ENCODE measurements at regions of chr20 and their contacts with region 1.

Region 1: DNA sequence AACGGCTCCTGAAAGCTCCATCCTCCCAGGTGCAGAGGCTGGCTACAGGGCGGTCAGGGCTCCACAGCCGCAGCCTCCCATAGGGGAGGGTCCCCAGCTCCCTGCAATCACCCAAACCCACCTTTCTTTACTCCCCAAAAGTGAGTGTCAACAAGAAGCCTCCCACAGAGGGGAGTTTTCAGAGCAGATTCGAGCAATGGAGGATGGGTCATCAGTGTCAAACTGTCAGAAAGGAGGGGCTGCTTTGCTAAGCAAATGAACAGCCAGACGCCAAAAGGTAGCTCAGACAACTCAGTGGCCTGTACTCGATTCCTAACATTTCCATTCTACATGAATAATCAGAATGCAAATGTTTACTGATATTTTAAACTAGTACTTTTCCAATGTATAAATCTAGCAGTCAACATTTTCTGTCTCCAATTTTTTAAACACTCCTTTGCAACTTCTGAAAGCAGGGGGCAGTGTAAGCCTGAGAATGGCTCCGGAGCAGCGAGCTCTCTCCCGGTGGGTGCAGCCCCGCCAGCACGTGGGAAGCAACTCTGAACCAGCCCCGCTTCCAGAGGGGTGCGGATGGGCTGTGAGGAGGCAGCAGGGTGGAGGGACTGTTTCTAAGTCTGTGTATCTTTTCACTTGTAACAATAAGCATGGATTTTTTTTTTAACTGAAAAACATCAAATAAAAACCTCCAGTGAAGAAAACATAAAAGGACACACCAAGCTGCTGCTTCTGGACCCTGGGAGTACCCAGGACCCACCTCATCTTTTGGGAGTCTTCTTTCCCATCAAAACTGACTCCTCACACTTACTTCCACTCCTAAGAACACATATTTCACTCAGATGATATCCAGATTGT is 54.9 kb downstream of the TAF4 start:
- DNase-seq: peak; percentile 27
- ATAC-seq: peak; percentile 65
- H3K4me3 Mint-ChIP-seq: no peak overlapping the region
- H3K27ac Mint-ChIP-seq: no peak overlapping the region
- H3K4me1 Mint-ChIP-seq: peaks cover 6% of the 10 kb centered on the region
- H3K27me3 Mint-ChIP-seq: no peaks in the 10 kb centered on the region
- CTCF ChIP-seq: no peak

Region 2: DNA sequence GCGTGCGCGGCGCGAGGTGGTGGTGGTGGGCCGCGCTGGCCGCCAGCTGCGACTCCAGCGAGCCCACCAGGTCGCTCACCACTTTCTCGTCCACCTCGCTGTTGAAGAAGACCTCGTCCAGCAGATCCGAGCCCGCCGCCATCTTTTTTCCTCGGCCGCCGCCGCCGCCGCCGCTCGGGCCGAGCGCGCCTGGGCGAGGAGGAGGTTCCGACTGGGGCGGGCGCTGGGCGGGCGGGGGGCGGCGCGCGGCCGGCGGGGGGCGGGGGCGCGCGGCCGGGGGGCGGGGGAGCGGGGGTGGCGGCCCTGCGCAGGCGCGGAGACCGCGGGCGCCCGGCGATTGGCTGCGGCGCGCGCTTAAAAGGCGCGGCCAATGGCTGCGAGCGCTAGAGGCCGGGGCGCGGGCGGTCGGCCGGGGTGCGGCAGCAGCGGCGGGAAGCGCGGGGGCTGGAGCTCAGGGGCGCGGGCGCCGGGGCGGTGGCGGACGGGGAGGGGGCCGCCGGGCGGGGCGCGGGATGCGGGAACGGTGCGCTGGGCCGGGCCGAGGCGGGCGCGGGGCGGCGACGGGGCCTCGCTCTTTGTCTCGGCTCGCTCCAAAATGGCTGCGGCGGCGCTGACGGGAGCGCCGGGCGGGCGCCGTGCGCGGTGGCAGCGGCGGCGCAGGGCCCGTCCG is 55.0 kb after region 1 on chr20 and contains the start of gene TAF4:
- CTCF ChIA-PET with region 1: interaction called, 5 read pairs
- POLR2A ChIA-PET with region 1: no interaction called
- intact Hi-C with region 1: loop called (anchors 5 kb)
- DNase-seq: peak; percentile 83
- ATAC-seq: peak; percentile 79
- H3K4me3 Mint-ChIP-seq: peak within 1 kb of the TSS; percentile 88
- H3K27ac Mint-ChIP-seq: peak within 1 kb of the TSS; percentile 89
- H3K4me1 Mint-ChIP-seq: peaks cover 49% of the 10 kb centered on the region
- H3K27me3 Mint-ChIP-seq: peaks cover 3% of the 10 kb centered on the region
- CTCF ChIP-seq: no peak
- total RNA-seq, gene TAF4: 24.9 and 26.9 TPM in 2 replicates

Region 3: DNA sequence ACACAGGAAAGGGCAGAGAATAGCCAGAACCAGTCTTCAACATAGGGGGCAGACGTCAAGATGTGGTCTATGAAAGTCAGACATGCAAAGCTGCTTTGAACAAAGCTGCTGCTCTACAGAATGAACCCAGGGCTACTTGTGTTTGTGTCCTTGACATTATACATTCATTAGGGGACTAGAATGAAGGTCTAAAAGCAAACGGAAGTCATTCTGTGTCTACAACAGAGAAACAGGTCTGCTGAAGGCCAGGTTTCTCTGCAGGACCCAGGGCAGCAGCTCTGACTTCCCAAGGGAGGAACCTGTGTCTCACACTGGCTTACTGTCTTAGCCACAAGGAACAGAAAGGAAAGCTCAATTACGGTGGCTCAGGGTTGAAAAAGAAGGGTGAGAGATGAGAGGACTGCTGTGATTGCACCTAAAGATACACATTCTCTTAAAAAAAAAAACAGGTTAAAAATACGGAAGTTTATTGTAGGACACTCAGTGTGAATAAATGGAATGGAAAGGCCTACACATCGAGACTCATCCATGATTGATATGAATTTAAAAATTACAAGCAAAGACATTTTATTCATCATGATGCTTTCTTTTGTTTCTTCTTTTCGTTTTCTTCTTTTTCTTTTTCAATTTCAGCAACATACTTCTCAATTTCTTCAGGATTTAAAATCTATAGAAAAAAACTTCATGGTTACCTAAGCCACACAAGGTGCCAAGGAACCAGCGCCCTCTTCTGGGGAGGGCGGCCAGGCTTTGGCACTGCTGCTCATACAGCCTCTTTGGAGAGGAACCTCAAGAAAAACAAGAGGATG is 125.7 kb after region 1 on chr20:
- CTCF ChIA-PET with region 1: interaction called, 46 read pairs
- POLR2A ChIA-PET with region 1: no interaction called
- intact Hi-C with region 1: loop called (anchors 1 kb)
- DNase-seq: peak; percentile 40
- ATAC-seq: peak; percentile 80
- H3K4me3 Mint-ChIP-seq: no peak overlapping the region
- H3K27ac Mint-ChIP-seq: no peak overlapping the region
- H3K4me1 Mint-ChIP-seq: peaks cover 37% of the 10 kb centered on the region
- H3K27me3 Mint-ChIP-seq: no peaks in the 10 kb centered on the region
- CTCF ChIP-seq: no peak

Region 4: DNA sequence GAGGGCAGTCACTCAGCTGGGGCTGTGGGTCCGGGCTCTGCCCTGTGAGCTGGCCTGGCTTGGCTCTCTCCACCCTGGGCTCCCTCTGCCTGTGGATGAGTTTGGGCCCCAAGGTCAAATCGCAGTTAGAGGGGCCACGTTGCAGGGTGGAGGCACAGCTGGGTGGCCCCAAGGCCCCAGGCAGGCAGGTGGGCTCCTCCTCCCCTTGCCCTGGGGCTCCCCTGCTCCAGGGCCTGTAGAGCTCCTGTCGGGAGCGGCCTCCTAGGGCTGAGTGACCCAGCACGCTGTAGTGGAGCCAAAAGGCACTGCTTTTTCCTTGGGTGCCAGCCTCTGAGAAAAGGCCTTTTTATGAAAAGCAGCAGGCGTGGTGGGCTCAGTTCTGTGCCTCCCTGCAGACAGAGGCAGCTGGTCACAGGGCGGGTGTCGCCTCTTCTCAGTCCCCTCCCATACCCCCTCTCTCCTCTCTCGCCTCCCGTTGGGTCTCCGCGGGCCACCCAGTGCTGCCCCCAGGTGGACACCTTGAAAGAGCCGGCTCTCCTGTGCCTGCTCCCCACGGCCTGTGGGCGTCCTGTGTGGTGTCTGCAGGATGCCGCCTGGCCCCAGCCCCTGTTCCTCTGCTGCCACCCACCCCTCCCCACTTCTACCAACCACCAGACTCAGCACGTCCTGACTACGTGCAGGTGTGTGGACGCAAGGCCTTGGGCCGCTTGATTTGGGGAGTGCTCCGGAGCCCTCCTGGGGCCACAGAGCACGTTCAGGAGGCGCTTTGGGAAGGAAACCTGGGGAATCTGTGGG is 146.0 kb after region 1 on chr20:
- CTCF ChIA-PET with region 1: interaction called, 12 read pairs
- POLR2A ChIA-PET with region 1: no interaction called
- intact Hi-C with region 1: no loop called
- DNase-seq: peak; percentile 58
- ATAC-seq: peak; percentile 97
- H3K4me3 Mint-ChIP-seq: no peak overlapping the region
- H3K27ac Mint-ChIP-seq: no peak overlapping the region
- H3K4me1 Mint-ChIP-seq: peaks cover 7% of the 10 kb centered on the region
- H3K27me3 Mint-ChIP-seq: no peaks in the 10 kb centered on the region
- CTCF ChIP-seq: no peak

Region 5: GRCh38 chr20:62274332-62274950 is 263.7 kb after region 1 on chr20:
- CTCF ChIA-PET with region 1: interaction called, 3 read pairs
- POLR2A ChIA-PET with region 1: no interaction called
- intact Hi-C with region 1: loop called (anchors 10 kb)
- DNase-seq: no peak
- ATAC-seq: peak; percentile 62
- H3K4me3 Mint-ChIP-seq: peak overlapping the region; percentile 6
- H3K27ac Mint-ChIP-seq: peak overlapping the region; percentile 64
- H3K4me1 Mint-ChIP-seq: peaks cover 18% of the 10 kb centered on the region
- H3K27me3 Mint-ChIP-seq: no peaks in the 10 kb centered on the region
- CTCF ChIP-seq: no peak

Region 6: DNA sequence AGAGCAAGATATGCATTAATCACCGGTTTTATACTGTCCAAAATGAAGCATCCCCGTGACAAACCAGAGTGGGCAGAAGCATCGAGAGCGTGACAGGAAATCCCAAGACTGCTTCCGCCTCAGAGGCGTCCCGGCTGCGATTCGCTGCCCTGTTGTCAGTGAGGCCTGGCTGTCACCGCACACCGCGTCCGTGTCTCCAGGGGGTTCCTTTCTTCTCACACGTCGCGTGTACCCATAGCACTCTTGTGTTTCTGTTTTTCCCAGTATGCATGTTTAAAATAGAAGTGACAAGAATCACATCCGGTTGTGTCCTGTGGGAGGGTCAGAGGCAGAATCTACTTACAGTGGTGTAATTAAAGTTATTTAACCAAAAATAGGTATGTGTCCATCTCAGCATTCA is 283.7 kb after region 1 on chr20:
- CTCF ChIA-PET with region 1: no interaction called
- POLR2A ChIA-PET with region 1: no interaction called
- intact Hi-C with region 1: loop called (anchors 2 kb)
- DNase-seq: no peak
- ATAC-seq: peak; percentile 59
- H3K4me3 Mint-ChIP-seq: no peak overlapping the region
- H3K27ac Mint-ChIP-seq: peak overlapping the region; percentile 46
- H3K4me1 Mint-ChIP-seq: peaks cover 41% of the 10 kb centered on the region
- H3K27me3 Mint-ChIP-seq: no peaks in the 10 kb centered on the region
- CTCF ChIP-seq: no peak